Naive thymus-derived CD4-positive, alpha-beta T cell (primary cell): ENCODE measurements at regions of chr19 and their contacts with region 1.

Region 1: GRCh38 chr19:39406656-39407393 is at the start of gene ZFP36:
- DNase-seq: peak; percentile 82 to 91 (median 86)
- ATAC-seq: peak; percentile 51
- H3K4me3 ChIP-seq: peak within 1 kb of the TSS; percentile 100
- H3K4me3 Mint-ChIP-seq: peak within 1 kb of the TSS; percentile 89 to 99 (median 94)
- H3K27ac ChIP-seq: peak within 1 kb of the TSS; percentile 100
- H3K27ac Mint-ChIP-seq: peak within 1 kb of the TSS; percentile 96 to 99 (median 99)
- H3K4me1 ChIP-seq: peaks cover 41 to 52% of the 10 kb centered on the region in 2 donors
- H3K4me1 Mint-ChIP-seq: peaks cover 28 to 67% (median 48%) of the 10 kb centered on the region in 7 donors
- H3K27me3 ChIP-seq: no peaks in the 10 kb centered on the region
- H3K27me3 Mint-ChIP-seq: peaks cover 0 to 3% (median 0%) of the 10 kb centered on the region in 5 donors
- total RNA-seq, gene ZFP36: 72.1 to 1,250 (median 187) TPM

Region 2: DNA sequence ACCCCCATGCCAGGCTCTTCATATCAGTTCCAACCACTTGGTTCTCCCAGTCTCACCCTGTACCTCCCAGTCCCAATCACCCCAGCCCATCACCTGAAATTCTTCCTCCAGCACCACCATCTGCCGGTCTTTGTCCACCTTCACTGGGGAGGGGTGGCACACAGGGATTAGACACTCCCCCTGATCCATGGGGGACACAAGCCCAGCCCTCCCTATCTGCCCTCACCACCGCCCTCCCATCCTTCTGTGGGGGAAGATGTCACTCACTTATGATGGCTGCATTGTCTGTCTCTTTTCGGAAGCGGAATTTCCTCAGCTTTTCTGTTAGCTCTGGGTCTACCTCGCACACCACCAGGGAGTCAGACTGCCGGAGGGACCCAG is 71.7 kb before region 1 on chr19:
- CTCF ChIA-PET with region 1: no interaction called
- POLR2A ChIA-PET with region 1: interaction called, 17 read pairs
- intact Hi-C with region 1: no loop called
- DNase-seq: peak in 5 of 9 donors; percentile 24 to 50 (median 40)
- ATAC-seq: peak; percentile 44
- H3K4me3 ChIP-seq: peak overlapping the region; percentile 97
- H3K4me3 Mint-ChIP-seq: peak overlapping the region; percentile 98 to 100 (median 100)
- H3K27ac ChIP-seq: peak overlapping the region; percentile 94
- H3K27ac Mint-ChIP-seq: peak overlapping the region; percentile 94 to 100 (median 99)
- H3K4me1 ChIP-seq: peaks cover 29 to 58% of the 10 kb centered on the region in 2 donors
- H3K4me1 Mint-ChIP-seq: peaks cover 49 to 80% (median 56%) of the 10 kb centered on the region in 7 donors
- H3K27me3 ChIP-seq: no peaks in the 10 kb centered on the region
- H3K27me3 Mint-ChIP-seq: no peaks in the 10 kb centered on the region

Region 3: GRCh38 chr19:39435499-39436349 is 28.9 kb after region 1 on chr19 and contains the start of gene RPS16:
- CTCF ChIA-PET with region 1: interaction called, 7 read pairs
- POLR2A ChIA-PET with region 1: interaction called, 92 read pairs
- intact Hi-C with region 1: loop called (anchors 1 kb)
- DNase-seq: peak; percentile 93 to 100 (median 98)
- ATAC-seq: peak; percentile 98
- H3K4me3 ChIP-seq: peak within 1 kb of the TSS; percentile 98
- H3K4me3 Mint-ChIP-seq: peak within 1 kb of the TSS; percentile 92 to 100 (median 98)
- H3K27ac ChIP-seq: peak within 1 kb of the TSS; percentile 97
- H3K27ac Mint-ChIP-seq: peak within 1 kb of the TSS; percentile 95 to 100 (median 99)
- H3K4me1 ChIP-seq: peaks cover 27% of the 10 kb centered on the region in 2 donors
- H3K4me1 Mint-ChIP-seq: peaks cover 20 to 53% (median 40%) of the 10 kb centered on the region in 7 donors
- H3K27me3 ChIP-seq: no peaks in the 10 kb centered on the region
- H3K27me3 Mint-ChIP-seq: peaks cover 0 to 5% (median 0%) of the 10 kb centered on the region in 5 donors
- total RNA-seq, gene RPS16: 2,281 to 4,335 (median 4,063) TPM